Activated naive CD4-positive, alpha-beta T cell treated with anti-CD3 and anti-CD28 coated beads for 36 hours (primary cell): ENCODE measurements at regions of chrX and their contacts with region 1.

Region 1: DNA sequence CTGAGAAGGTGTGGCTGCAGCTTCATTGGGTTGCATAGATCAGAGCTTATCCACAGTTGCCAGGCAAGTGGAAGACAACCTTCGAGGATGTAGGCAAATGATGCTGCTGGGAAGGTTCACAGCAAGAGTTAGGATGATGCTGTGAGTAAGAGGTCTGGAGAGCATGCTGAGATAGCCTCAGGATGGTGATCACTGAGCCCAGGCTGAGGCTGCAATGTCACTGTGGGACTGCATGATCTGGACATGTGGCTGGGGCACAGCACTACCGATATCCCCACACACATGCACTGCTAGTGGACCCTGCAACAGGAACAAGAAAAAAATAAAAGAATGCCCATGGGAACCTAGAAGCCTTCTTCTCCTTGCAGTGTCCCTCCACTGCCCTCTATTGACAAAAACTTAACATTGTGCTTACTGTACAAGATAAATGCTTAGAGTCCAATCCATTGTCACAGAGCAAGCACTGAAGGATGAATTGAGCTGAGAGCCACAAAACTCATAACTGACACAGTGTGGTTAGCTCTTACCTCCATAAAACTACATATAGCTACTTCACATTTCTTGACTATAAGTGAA is 105.6 kb downstream of the CNKSR2 start:
- DNase-seq: no peak
- H3K4me3 Mint-ChIP-seq: no peak overlapping the region
- H3K27ac Mint-ChIP-seq: no peak overlapping the region
- H3K4me1 Mint-ChIP-seq: peaks cover 3% of the 10 kb centered on the region
- H3K27me3 Mint-ChIP-seq: no peaks in the 10 kb centered on the region

Region 2: DNA sequence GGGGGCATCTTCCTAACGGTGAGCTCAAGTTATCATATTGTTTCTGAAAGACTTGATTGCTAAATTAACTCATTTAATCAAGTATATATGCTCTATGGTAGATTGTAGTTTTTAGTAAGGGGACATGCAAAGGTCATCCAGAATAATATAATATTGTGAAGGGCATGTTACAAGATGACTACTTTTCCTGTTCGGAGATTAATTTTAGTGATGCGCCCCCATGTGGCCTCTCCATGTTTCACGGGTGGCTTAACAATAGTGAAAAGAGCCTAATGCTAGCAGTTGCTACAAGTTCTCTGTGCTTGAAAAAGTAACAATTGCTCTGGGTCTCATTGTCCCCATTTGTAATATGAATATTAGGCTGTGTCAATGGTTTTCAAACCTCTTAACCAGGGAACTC is 266.0 kb after region 1 on chrX:
- CTCF ChIA-PET with region 1: no interaction called
- intact Hi-C with region 1: loop called (anchors 10 kb)
- DNase-seq: peak; percentile 64
- H3K4me3 Mint-ChIP-seq: no peak overlapping the region
- H3K27ac Mint-ChIP-seq: no peak overlapping the region
- H3K4me1 Mint-ChIP-seq: no peaks in the 10 kb centered on the region
- H3K27me3 Mint-ChIP-seq: no peaks in the 10 kb centered on the region

Region 3: DNA sequence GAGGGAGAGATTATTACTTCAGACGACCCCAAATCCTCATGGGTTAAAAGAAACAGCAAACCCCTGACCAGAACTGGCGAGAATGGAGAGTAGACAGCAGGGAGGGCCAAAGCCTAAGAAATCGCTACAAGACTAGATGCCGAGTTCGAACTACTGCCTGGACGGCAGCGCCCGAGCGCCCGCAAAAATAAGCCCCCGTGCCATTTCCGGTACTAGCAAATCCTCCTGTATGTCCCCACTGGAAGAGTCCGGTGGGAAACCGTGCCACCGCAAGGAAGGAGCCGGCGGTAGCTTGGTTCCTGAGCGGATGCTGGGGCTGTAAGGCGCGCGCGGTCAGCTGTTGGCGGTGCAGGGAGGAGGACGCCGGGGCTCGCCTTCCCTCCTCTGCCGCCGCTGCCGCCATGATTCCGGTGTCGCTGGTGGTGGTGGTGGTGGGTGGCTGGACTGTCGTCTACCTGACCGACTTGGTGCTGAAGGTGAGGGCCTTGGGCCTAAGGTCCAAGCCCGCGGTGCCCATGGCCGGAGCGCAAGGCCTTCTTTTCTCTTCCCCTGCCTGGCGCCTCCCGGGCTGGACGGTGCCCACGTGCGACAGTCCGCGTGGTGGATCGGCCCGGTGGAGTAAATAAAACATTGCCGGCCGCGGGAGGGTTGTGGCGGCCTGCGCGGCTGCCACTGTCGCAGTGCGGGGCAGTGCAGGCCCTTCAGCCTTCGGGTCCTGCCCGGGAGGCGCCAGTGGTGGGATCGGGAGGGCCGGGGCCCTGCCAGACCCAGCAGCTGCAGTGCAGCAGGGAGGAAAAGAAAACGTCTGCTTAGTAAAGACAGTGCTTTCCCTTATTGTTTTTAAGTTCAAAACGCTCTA is 359.8 kb after region 1 on chrX and contains the start of gene MBTPS2:
- CTCF ChIA-PET with region 1: no interaction called
- intact Hi-C with region 1: no loop called
- DNase-seq: peak; percentile 86
- H3K4me3 Mint-ChIP-seq: peak within 1 kb of the TSS; percentile 81
- H3K27ac Mint-ChIP-seq: peak within 1 kb of the TSS; percentile 92
- H3K4me1 Mint-ChIP-seq: peaks cover 9% of the 10 kb centered on the region
- H3K27me3 Mint-ChIP-seq: no peaks in the 10 kb centered on the region
- total RNA-seq, gene MBTPS2: 4.7 to 5.4 TPM